MCF 10A (cell line): ENCODE measurements at regions of chr19 and their contacts with region 1.

Region 1: DNA sequence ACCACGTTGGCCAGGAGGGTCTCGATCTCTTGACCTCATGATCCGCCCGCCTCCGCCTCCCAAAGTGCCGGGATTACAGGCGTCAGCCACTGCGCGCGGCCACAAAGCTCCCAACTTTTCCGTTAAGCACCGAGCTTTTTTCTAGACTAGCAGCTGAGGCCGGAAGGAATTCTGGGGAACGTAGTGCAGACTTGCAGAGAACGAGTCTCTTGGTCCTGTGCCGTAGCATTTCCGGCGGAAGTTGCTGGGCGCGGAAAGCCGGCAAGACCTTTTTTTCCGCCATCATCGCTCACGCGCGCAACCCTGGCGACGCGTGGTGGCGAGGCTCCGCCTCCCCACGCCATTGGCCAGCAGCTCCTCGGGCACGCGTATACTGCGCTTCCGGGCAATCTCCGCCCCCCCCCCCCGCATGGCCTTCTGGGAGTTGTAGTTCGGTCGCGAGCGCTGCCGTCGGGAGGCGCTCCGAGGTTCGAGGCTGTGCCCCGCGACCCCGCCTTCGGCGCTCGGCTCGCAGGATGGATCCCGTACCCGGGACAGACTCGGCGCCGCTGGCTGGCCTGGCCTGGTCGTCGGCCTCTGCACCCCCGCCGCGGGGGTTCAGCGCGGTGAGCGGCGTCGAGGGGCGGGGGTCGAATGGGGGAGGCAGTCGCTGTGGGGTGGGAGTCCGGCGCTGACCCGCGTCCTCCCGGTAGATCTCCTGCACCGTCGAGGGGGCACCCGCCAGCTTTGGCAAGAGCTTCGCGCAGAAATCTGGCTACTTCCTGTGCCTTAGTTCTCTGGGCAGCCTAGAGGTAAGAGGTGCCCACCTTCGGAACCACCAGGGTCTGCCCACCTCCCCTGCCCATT is at the start of gene MVB12A:
- DNase-seq: peak; percentile 98
- H3K4me3 Mint-ChIP-seq: peak within 1 kb of the TSS; percentile 88
- H3K27ac Mint-ChIP-seq: peak within 1 kb of the TSS; percentile 95
- H3K4me1 Mint-ChIP-seq: peaks cover 16% of the 10 kb centered on the region
- H3K27me3 Mint-ChIP-seq: no peaks in the 10 kb centered on the region
- CTCF ChIP-seq: no peak
- total RNA-seq, gene MVB12A: 47.7 and 51.1 TPM in 2 replicates

Region 2: DNA sequence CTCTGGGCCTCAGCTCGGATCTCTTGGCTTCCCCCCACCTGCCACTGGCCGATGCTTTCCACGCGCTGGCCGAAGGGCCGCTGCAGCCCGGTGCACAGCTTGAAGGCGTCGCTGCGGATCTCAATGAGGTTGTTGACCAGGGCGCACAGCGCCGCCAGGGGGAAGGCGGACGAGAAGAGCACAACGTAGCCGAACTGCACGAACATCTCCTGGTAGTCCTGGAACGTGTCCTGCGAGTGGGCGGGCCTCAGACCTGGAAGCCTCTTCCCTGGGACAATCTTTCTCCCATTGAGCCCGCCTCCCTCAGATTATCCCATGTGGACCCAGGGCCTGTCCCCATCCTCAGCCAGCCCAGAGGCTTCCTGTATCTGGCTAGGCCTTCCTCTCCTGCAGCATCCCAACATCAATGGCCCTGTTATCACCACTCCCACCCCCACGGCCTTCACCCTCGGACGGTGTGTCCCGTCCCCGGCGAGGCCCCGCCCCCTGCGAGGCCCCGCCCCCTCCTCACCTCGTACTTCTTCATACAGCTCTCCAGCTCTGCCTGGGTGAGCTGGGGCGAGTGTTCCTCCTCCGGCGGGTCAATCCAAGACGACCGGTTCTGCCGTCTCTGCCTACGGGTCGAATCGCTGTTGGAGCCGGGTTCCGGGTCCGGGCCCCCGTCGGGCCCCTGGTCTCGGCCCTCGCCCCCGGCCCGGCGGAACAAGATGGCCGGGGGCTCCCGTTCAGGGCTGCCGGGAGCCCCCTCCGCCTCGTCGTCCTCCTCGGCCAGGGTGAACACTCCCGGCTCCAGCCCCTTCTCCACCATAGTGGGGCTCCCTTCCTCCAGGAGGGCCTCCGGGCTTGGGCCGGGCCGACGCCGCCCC is 92.0 kb before region 1 on chr19:
- CTCF ChIA-PET with region 1: no interaction called
- POLR2A ChIA-PET with region 1: no interaction called
- intact Hi-C with region 1: no loop called
- DNase-seq: no peak
- H3K4me3 Mint-ChIP-seq: peak overlapping the region; percentile 21
- H3K27ac Mint-ChIP-seq: no peak overlapping the region
- H3K4me1 Mint-ChIP-seq: peaks cover 5% of the 10 kb centered on the region
- H3K27me3 Mint-ChIP-seq: no peaks in the 10 kb centered on the region
- CTCF ChIP-seq: no peak

Region 3: DNA sequence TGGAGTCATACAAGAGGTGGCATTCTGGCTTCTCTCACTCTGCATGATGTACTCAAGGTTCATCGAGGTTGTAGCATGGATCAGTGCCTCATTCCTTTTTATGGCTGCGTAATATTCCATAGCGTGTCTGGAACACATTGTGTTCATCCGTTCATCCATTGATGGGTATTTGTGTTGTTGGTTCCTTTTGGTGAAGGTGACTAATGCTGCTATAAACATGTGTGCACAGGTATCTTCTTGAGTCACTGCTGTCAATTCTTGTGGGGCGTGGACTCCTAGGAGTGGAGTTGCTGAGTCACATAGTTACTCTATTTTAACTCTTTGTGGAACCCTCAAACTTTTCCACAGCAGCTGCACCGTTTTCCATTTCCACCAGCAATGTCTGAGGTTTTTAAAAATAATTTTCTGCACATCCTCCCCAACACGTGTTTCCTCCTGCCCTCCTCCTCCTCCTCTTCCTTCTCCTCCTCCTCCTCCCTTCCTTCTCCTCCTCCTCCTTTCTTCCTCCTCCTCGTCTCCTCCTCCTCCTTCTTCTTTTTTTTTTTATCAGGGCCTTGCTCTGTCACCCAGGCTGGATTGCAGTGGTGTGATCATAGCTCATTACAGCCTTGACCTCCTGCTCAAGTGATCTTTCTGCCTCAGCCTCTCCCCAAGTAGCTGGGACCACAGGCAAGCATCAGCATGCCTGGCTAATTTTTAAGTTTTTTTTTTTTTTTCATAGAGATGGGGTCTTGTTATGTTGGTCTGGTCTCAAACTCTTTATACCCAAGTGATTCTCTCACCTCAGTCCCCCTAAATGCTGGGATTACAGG is 30.6 kb after region 1 on chr19:
- CTCF ChIA-PET with region 1: no interaction called
- POLR2A ChIA-PET with region 1: interaction called, 7 read pairs
- intact Hi-C with region 1: loop called (anchors 1 kb)
- DNase-seq: peak; percentile 94
- H3K4me3 Mint-ChIP-seq: no peak overlapping the region
- H3K27ac Mint-ChIP-seq: peak overlapping the region; percentile 14
- H3K4me1 Mint-ChIP-seq: peaks cover 5% of the 10 kb centered on the region
- H3K27me3 Mint-ChIP-seq: no peaks in the 10 kb centered on the region
- CTCF ChIP-seq: no peak

Region 4: DNA sequence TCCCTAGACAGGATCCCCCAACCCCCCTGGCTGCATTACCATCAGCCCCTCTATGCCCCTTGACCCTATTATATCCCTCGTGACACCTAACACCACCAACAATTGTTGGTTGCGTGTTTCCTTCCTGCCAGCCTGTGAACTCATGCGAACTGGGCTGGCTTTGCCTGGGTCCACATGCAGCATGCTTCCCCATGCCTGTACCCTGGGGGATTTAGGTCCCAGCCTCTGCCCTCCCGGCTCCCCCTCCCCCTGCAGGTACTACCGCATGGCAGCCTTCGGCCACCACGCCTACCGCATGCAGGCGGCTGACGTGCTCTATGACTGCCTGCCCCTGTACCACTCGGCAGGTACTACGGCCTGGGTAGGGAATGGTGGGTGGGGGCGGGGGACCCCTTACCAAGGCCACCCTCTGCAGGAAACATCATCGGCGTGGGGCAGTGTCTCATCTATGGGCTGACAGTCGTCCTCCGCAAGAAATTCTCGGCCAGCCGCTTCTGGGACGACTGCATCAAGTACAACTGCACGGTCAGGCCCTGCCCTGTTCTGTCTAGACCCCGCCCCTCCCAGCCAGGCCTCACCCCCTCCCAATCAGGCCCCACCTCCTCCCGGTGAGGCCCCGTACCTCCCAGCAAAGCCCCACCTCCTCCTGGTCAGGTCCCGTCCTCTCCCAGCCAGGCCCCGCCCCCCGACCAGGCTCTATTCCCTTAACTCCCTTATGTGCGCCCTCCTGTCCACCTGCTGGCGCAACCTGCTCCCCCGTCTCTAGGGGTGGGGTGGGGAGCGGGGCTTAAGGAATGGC is 68.9 kb after region 1 on chr19:
- CTCF ChIA-PET with region 1: no interaction called
- POLR2A ChIA-PET with region 1: no interaction called
- intact Hi-C with region 1: no loop called
- DNase-seq: peak; percentile 67
- H3K4me3 Mint-ChIP-seq: no peak overlapping the region
- H3K27ac Mint-ChIP-seq: no peak overlapping the region
- H3K4me1 Mint-ChIP-seq: peaks cover 11% of the 10 kb centered on the region
- H3K27me3 Mint-ChIP-seq: no peaks in the 10 kb centered on the region
- CTCF ChIP-seq: no peak